RWPE1 (cell line): ENCODE measurements at regions of chr6 and their contacts with region 1.

Region 1: GRCh38 chr6:20058121-20058905 is 154.0 kb downstream of the MBOAT1 start:
- DNase-seq: no peak
- H3K27ac ChIP-seq: no peak overlapping the region
- CTCF ChIP-seq: no peak

Region 2: DNA sequence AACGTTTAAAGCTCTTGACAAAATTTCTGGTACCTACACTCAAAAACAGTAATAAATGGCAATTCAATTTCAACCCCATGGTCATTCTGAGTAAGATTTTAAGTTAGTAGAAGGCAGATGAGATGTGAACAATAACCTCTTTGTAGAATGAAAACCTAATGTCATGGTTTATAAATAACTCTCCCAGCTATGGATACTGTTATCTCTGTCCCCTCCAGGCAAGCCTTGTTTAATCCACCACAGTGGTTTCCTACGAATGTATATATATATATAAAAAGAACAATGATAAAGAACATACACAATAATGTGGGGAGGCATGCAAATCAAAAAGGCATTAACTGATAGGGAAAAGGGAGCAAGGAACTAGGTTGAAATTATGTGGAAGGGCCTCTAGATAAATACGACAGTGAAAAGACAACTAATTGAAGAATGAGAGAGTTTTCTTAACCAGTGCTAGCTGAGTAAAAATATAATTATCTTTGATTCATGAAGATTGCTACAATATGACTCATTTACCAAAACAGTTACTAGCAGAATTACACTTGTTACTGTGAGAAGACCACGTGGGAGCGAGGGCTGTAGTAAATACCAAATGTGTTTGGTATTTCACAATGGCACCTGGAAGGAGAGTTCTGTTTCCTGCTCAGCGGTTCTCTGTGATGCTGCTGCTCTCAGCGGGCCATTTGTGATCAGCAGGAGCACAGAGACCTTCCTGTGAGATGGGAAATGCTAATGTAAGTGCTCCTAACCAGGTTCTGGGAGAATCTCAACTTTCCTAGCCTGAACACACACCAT is 19.7 kb before region 1 on chr6:
- CTCF ChIA-PET with region 1: no interaction called
- POLR2A ChIA-PET with region 1: interaction called, 12 read pairs
- DNase-seq: peak; percentile 41
- H3K27ac ChIP-seq: no peak overlapping the region
- CTCF ChIP-seq: no peak

Region 3: DNA sequence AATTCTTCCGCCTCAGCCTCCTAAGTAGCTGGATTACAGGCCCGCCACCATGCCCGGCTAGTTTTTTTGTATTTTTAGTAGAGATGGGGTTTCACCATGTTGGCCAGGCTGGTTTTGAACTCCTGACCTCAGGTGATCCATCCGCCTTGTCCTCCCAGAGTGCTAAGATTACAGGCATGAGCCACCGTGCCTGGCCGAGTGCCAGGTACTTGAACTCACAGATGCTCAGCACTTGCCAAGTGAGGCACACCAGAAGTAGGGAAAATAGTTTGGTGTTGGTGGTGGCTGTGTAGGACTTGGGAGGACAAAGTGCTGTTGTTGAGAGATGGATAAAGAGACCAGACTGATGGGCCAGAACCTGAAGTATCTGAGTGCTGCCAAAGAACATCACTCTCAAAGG is 194.0 kb after region 1 on chr6:
- CTCF ChIA-PET with region 1: no interaction called
- POLR2A ChIA-PET with region 1: no interaction called
- DNase-seq: no peak
- H3K27ac ChIP-seq: no peak overlapping the region
- CTCF ChIP-seq: no peak